MCF 10A (cell line): ENCODE measurements at regions of chr1 and their contacts with region 1.

Region 1: DNA sequence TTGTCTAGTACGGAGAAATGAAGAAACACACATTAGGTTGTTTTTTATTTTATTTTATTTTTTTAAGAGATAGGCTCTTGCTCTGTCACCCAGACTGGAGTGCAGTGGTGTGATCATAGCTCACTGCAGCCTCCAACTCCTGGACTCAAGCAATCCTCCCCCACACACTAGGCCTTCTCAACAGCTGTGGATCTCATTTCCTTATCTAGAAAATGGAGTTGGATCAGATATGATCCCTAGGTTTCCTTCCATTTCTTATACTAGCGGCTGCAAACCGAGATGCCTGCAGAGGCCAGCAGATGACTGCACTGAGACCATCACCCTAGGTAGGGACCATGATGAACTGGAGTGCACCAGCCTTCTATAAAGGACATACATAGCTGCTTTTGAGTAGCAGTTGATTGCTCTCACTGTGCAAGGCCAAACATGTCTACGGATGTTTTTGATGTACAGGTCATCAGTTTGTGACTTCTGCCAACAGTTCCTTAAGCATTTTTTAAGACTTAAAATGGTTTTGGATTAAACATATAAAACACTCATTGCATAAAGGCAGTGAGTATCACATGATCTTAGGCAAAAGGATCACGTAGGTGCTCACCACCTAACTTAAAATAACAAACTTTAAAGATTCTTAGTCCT is 11.4 kb upstream of the KLHL12 start:
- DNase-seq: no peak
- H3K4me3 Mint-ChIP-seq: no peak overlapping the region
- H3K27ac Mint-ChIP-seq: no peak overlapping the region
- H3K4me1 Mint-ChIP-seq: no peaks in the 10 kb centered on the region
- H3K27me3 Mint-ChIP-seq: peaks cover 16% of the 10 kb centered on the region
- CTCF ChIP-seq: no peak

Region 2: DNA sequence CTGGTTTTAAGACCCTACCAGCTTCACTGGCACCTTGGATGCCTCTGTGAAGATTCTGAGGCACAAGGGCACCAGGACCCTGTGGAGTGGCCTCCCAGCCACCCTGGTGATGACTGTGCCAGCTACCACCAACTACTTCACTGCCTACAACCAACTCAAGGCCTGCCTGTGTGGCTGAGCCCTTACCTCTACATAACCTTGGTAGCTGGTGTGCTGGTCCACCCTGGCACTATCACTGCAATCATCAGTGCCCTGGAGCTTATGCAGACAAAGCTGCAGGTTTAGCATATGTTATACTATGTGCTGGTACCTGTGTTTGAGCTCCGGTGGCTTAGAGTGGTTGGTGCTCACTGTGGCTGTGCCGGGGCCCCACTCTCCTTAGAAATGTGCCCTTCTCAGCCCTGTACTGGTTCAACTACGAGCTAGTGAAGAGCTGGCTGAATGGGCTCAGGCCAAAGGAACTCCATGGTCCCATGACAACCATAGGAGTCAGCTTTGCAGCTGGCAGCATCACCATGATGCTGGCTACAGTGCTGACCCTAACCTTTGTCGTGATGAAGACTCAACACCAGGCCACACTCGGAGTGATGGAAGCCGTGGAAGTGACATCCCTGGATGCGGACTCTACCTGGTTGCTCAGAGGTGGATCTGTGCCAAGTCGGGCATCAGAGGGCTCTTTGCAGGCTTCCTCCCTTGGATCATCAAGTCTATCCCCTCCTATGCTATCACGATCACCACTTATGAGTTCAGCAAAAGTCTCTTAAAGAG is 141.9 kb before region 1 on chr1:
- CTCF ChIA-PET with region 1: no interaction called
- POLR2A ChIA-PET with region 1: no interaction called
- intact Hi-C with region 1: no loop called
- DNase-seq: no peak
- H3K4me3 Mint-ChIP-seq: no peak overlapping the region
- H3K27ac Mint-ChIP-seq: no peak overlapping the region
- H3K4me1 Mint-ChIP-seq: peaks cover 11% of the 10 kb centered on the region
- H3K27me3 Mint-ChIP-seq: no peaks in the 10 kb centered on the region
- CTCF ChIP-seq: no peak

Region 3: GRCh38 chr1:202952818-202953217 is 14.4 kb after region 1 on chr1:
- CTCF ChIA-PET with region 1: interaction called, 57 read pairs
- POLR2A ChIA-PET with region 1: interaction called, 108 read pairs
- intact Hi-C with region 1: no loop called
- DNase-seq: peak; percentile 93
- H3K4me3 Mint-ChIP-seq: peak overlapping the region; percentile 48
- H3K27ac Mint-ChIP-seq: peak overlapping the region; percentile 65
- H3K4me1 Mint-ChIP-seq: peaks cover 55% of the 10 kb centered on the region
- H3K27me3 Mint-ChIP-seq: no peaks in the 10 kb centered on the region
- CTCF ChIP-seq: no peak

Region 4: GRCh38 chr1:202982715-202983430 is 44.5 kb after region 1 on chr1:
- CTCF ChIA-PET with region 1: no interaction called
- POLR2A ChIA-PET with region 1: no interaction called
- intact Hi-C with region 1: no loop called
- DNase-seq: peak; percentile 64
- H3K4me3 Mint-ChIP-seq: no peak overlapping the region
- H3K27ac Mint-ChIP-seq: no peak overlapping the region
- H3K4me1 Mint-ChIP-seq: no peaks in the 10 kb centered on the region
- H3K27me3 Mint-ChIP-seq: peaks cover 30% of the 10 kb centered on the region
- CTCF ChIP-seq: no peak

Region 5: DNA sequence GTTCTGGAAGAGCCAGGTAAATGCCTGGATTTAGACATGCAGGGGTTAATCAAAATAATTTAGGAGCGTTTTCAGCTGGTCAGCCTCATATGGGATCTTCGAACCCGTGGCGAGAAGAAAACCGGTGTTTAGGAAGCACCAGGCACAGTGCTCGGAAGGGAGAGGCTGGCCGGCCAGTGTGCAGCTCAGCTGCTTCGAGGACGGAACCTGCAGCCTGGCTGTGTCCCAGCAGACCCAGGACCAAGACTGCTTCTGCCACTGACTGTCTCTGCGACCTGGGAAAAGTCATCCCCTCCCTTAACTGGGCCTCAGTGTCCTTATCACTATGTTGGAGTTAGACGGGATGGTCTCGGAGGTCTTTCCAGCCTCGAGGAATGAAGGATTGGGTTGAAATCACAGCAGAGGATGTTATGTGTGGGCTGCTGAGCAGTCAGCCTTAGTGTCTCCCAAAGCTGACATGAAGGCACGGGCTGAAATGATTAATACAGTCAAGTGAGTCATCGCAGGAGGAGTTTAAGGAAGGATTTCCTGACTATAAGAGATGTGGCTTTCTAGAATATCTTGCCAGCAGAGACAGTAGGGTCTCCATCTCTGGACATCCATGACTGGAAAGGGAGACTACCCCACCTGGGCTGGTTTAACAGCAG is 108.7 kb after region 1 on chr1:
- CTCF ChIA-PET with region 1: no interaction called
- POLR2A ChIA-PET with region 1: no interaction called
- intact Hi-C with region 1: no loop called
- DNase-seq: peak; percentile 93
- H3K4me3 Mint-ChIP-seq: no peak overlapping the region
- H3K27ac Mint-ChIP-seq: no peak overlapping the region
- H3K4me1 Mint-ChIP-seq: peaks cover 13% of the 10 kb centered on the region
- H3K27me3 Mint-ChIP-seq: no peaks in the 10 kb centered on the region
- CTCF ChIP-seq: no peak